HepG2 (cell line): ENCODE measurements at regions of chr6 and their contacts with region 1.

Region 1: DNA sequence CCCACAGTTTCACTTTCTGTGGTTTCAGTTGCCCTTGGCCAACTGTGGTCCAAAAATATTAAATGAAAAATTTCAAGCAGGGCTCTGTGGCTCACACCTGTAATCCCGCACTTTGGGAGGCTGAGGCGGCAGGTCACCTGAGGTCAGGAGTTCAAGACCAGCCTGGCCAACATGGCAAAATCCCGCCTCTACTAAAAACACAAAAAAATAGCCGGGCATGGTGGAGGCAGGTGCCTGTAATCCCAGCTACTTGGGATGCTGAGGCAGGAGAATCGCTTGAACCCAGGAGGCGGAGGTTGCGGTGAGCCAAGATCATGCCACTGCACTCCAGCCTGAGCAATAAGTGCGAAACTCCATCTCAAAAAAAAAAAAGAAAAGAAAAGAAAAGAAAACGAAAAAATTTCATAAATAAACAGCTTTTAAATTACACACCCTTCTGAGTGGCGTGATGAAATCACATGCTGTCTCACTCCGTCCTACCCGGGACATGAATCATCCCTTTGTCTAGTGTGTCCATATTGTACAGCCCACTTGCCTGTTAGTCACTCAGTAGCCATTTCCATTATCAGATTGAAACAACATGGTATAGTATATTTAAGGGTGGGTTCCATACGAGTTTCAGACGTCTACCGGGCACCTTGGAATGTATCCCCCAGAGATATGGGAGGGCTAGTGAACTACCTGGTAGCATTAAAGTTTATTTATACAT is 11.7 kb downstream of the PTPRK start:
- DNase-seq: peak; percentile 97
- ATAC-seq: peak; percentile 71
- H3K4me3 ChIP-seq: peak overlapping the region; percentile 17 to 66 (median 55); a peak in 5 of 6 replicates
- H3K27ac ChIP-seq: peak overlapping the region; percentile 98
- H3K4me1 ChIP-seq: peaks cover 96% of the 10 kb centered on the region
- H3K27me3 ChIP-seq: no peaks in the 10 kb centered on the region
- CTCF ChIP-seq: no peak
- EP300 ChIP-seq: peak in 1 of 2 experiments; percentile 71; a peak in 3 of 4 replicates
- POLR2A ChIP-seq: peak in 1 of 2 experiments; percentile 61; a peak in 1 of 4 replicates
- RAD21 ChIP-seq: no peak

Region 2: GRCh38 chr6:127459231-127459641 is 1049.5 kb before region 1 on chr6 and contains the start of gene KIAA0408:
- CTCF ChIA-PET with region 1: no interaction called
- POLR2A ChIA-PET with region 1: no interaction called
- in situ Hi-C with region 1: no loop called
- intact Hi-C with region 1: no loop called
- DNase-seq: no peak
- ATAC-seq: peak; percentile 66
- H3K4me3 ChIP-seq: no peak within 1 kb of the TSS
- H3K27ac ChIP-seq: no peak within 1 kb of the TSS
- H3K4me1 ChIP-seq: peaks cover 7% of the 10 kb centered on the region
- H3K27me3 ChIP-seq: no peaks in the 10 kb centered on the region
- CTCF ChIP-seq: no peak
- EP300 ChIP-seq: no peak
- POLR2A ChIP-seq: no peak
- RAD21 ChIP-seq: no peak
- total RNA-seq, gene KIAA0408: not detected in 2 replicates

Region 3: GRCh38 chr6:128062882-128063603 is 445.7 kb before region 1 on chr6:
- CTCF ChIA-PET with region 1: no interaction called
- POLR2A ChIA-PET with region 1: interaction called, 13 read pairs
- in situ Hi-C with region 1: no loop called
- intact Hi-C with region 1: no loop called
- DNase-seq: peak; percentile 98
- ATAC-seq: peak; percentile 99
- H3K4me3 ChIP-seq: peak overlapping the region in 1 of 3 experiments; percentile 5; a peak in 1 of 6 replicates
- H3K27ac ChIP-seq: peak overlapping the region; percentile 77
- H3K4me1 ChIP-seq: peaks cover 54% of the 10 kb centered on the region
- H3K27me3 ChIP-seq: no peaks in the 10 kb centered on the region
- CTCF ChIP-seq: no peak
- EP300 ChIP-seq: peak; percentile 98 to 99
- POLR2A ChIP-seq: no peak
- RAD21 ChIP-seq: peak; percentile 38; the same call in 1 of the 2 replicates

Region 4: DNA sequence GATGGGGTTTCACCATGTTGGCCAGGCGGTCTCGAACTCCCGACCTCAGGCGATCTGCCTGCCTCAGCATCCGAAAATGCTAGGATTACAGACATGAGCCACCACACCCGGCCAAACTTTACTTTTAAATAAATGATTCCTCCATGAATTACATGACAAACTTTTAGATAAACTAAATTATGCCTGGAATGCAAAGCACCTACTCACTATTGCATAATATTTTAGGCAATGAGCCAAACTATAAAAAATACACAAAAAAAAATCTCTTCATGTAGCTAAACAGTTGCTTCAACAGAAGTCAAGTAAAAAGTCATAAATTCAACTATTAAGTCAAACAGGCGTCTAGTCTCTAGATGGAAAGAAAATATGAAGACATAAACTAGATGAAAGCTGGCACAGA is 44.8 kb before region 1 on chr6:
- CTCF ChIA-PET with region 1: no interaction called
- POLR2A ChIA-PET with region 1: interaction called, 4 read pairs
- in situ Hi-C with region 1: no loop called
- intact Hi-C with region 1: loop called (anchors 5 kb)
- DNase-seq: no peak
- ATAC-seq: no peak
- H3K4me3 ChIP-seq: no peak overlapping the region
- H3K27ac ChIP-seq: no peak overlapping the region
- H3K4me1 ChIP-seq: peaks cover 18% of the 10 kb centered on the region
- H3K27me3 ChIP-seq: no peaks in the 10 kb centered on the region
- CTCF ChIP-seq: no peak
- EP300 ChIP-seq: no peak
- POLR2A ChIP-seq: no peak
- RAD21 ChIP-seq: no peak